ENCODE measurements at regions of chr11 and their contacts with region 1.

Region 1: GRCh38 chr11:124070915-124071635 is 29.9 kb upstream of the OR10G7 start:
- DNase-seq: peak; percentile 37
- ATAC-seq: peak; percentile 56
- H3K4me3 Mint-ChIP-seq: peak overlapping the region; percentile 24
- H3K27ac Mint-ChIP-seq: peak overlapping the region; percentile 27
- H3K4me1 Mint-ChIP-seq: peaks cover 17% of the 10 kb centered on the region
- H3K27me3 Mint-ChIP-seq: peaks cover 9% of the 10 kb centered on the region
- CTCF ChIP-seq: peak; percentile 38

Region 2: DNA sequence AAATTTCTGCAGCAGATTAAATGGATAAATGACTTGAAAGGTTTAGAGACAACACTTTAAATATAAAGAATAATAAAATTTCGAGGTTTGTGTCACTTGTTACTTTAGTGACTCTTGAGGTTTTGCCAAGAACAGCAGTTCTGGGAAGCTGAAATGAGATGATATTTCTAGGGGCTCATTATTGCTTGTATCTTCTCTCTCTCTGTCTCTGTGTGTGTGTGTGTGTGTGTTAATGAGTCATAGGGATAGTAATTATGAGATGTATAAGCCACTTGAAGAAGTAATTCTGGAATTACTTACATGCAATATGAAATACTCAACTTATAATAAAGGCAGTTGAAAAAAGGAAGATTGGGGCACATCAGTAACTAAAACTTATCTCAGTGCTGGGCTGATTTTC is 20.3 kb before region 1 on chr11:
- CTCF ChIA-PET with region 1: no interaction called
- POLR2A ChIA-PET with region 1: no interaction called
- intact Hi-C with region 1: no loop called
- DNase-seq: no peak
- ATAC-seq: no peak
- H3K4me3 Mint-ChIP-seq: no peak overlapping the region
- H3K27ac Mint-ChIP-seq: no peak overlapping the region
- H3K4me1 Mint-ChIP-seq: no peaks in the 10 kb centered on the region
- H3K27me3 Mint-ChIP-seq: peaks cover 2% of the 10 kb centered on the region
- CTCF ChIP-seq: no peak

Region 3: GRCh38 chr11:124108156-124108555 is 37.1 kb after region 1 on chr11:
- CTCF ChIA-PET with region 1: no interaction called
- POLR2A ChIA-PET with region 1: no interaction called
- intact Hi-C with region 1: loop called (anchors 2 kb)
- DNase-seq: no peak
- ATAC-seq: no peak
- H3K4me3 Mint-ChIP-seq: no peak overlapping the region
- H3K27ac Mint-ChIP-seq: no peak overlapping the region
- H3K4me1 Mint-ChIP-seq: peaks cover 18% of the 10 kb centered on the region
- H3K27me3 Mint-ChIP-seq: peaks cover 8% of the 10 kb centered on the region
- CTCF ChIP-seq: no peak

Region 4: DNA sequence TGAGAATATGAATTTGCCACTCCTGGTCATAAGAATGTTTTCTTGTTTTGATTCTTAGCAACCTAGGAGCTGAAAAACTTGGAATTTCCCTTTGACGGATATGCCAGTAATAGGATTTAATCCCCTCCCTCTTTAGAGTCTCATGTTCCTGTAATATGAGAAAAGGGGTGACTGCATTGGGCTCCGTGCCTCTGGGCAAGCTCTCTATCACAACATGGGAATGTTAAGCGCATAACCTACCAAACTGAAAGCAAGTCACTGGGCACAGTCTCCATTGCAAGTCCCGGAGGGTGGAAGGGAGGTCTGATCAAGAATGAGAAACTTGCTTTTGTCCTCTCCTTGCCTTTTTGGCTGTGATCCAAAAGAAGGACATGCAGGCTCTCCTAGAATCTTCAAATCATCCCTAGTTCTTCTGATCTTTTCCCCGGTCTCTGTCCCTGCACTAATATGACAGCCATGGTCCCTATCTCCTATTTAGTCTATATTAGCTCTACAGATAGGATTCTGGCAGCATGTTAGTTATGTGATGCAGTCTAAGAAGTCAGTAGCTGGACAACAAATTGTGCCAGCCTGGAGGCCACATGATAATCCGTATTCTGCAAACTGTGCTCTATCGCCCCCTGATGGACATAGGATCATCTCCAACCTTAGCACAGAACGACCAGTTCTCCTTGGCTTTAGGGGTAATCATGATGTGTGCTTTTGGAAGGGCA is 123.8 kb after region 1 on chr11:
- CTCF ChIA-PET with region 1: interaction called, 7 read pairs
- POLR2A ChIA-PET with region 1: no interaction called
- intact Hi-C with region 1: loop called (anchors 1 kb)
- DNase-seq: no peak
- ATAC-seq: no peak
- H3K4me3 Mint-ChIP-seq: no peak overlapping the region
- H3K27ac Mint-ChIP-seq: no peak overlapping the region
- H3K4me1 Mint-ChIP-seq: peaks cover 2% of the 10 kb centered on the region
- H3K27me3 Mint-ChIP-seq: peaks cover 2% of the 10 kb centered on the region
- CTCF ChIP-seq: no peak

Region 5: DNA sequence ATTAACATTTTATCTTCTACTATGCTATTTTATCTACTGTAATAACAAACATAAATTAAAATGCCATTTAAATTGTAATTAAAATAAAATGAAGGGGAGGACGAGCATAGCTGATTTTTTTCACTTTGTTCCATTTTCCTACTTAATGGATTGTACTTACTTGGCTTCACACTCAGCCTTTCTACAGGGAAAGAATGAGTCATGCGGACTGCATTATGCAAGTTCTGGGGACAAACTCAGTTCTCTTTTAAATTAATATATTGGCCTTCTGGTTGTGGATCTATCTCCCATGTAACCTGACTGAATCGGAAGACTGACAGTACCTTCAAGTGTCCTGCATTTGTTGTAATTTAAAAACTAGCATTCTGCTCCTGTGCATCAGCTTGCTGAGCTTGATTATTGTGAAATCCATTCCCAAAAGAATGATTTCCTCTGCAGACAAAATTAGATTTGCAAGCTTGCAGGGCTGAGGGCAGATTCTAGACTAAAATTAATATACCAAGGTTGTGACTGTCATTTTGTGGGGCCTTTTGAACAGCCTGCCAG is 230.5 kb after region 1 on chr11:
- CTCF ChIA-PET with region 1: no interaction called
- POLR2A ChIA-PET with region 1: no interaction called
- intact Hi-C with region 1: no loop called
- DNase-seq: no peak
- ATAC-seq: no peak
- H3K4me3 Mint-ChIP-seq: no peak overlapping the region
- H3K27ac Mint-ChIP-seq: no peak overlapping the region
- H3K4me1 Mint-ChIP-seq: no peaks in the 10 kb centered on the region
- H3K27me3 Mint-ChIP-seq: peaks cover 3% of the 10 kb centered on the region
- CTCF ChIP-seq: no peak

Region 6: DNA sequence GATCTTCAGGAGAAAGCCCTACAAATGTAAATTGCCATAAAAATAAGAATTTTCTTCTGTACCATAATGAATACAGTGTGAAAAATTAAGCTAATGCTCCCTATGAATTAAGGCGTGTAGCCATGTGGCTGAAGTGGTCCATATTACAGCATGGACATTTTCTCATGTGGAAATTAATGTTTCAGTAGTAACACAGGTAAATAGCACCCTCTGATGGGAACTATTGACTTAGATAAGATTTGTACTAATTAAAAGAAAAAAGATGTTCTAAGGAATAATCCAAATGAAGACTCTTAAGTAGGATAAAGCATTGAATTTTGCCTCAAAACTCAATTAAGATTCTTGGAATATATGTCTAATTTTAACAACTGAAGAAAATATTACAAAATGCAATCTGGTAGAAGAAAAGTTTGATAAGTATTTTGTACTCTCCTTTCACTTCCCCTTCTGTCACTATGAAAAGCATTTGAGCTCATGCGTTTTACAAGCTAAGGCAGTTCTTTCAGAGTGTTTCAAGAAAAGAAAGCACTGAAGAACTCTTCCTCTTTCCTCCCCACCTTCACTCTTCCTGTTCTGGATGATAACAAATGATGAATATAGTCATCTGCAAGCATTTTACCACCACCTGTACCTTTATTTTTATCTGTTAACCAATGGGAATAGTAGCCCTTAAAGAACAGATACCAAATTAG is 258.9 kb after region 1 on chr11:
- CTCF ChIA-PET with region 1: interaction called, 9 read pairs
- POLR2A ChIA-PET with region 1: no interaction called
- intact Hi-C with region 1: loop called (anchors 1 kb)
- DNase-seq: no peak
- ATAC-seq: peak; percentile 84
- H3K4me3 Mint-ChIP-seq: peak overlapping the region; percentile 19
- H3K27ac Mint-ChIP-seq: peak overlapping the region; percentile 55
- H3K4me1 Mint-ChIP-seq: peaks cover 49% of the 10 kb centered on the region
- H3K27me3 Mint-ChIP-seq: no peaks in the 10 kb centered on the region
- CTCF ChIP-seq: no peak

Region 7: GRCh38 chr11:124402326-124402922 is 331.3 kb after region 1 on chr11:
- CTCF ChIA-PET with region 1: no interaction called
- POLR2A ChIA-PET with region 1: no interaction called
- intact Hi-C with region 1: loop called (anchors 1 kb)
- DNase-seq: no peak
- ATAC-seq: peak; percentile 40
- H3K4me3 Mint-ChIP-seq: no peak overlapping the region
- H3K27ac Mint-ChIP-seq: no peak overlapping the region
- H3K4me1 Mint-ChIP-seq: peaks cover 6% of the 10 kb centered on the region
- H3K27me3 Mint-ChIP-seq: peaks cover 6% of the 10 kb centered on the region
- CTCF ChIP-seq: no peak

Region 8: DNA sequence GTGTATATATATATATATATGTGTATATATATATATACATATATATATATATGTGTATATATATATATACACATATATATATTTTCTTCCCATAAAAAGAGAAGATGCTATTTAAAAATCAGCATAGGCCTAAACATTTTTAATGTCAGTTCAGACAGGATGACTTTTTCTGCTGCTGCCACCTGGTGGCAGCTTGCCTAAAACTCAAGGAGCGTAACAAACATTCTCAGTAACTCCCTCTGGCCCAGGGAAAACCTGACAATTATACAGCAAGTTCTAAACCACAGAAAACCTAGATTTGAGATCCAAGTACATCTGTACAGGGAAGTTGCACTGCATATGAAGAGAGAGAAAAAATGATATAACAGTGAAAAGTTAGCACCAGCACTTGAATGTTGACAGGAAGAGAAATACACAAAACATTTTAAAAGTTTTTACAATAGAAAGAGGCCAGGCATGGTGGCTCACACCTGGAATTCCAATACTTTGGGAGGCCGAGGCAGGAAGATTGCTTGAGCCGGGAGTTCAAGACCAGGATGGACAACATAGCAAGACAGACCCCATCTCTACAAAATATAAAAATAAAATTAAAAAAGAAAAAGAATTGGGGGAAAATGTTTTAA is 515.3 kb after region 1 on chr11:
- CTCF ChIA-PET with region 1: interaction called, 49 read pairs
- POLR2A ChIA-PET with region 1: no interaction called
- intact Hi-C with region 1: loop called (anchors 1 kb)
- DNase-seq: peak; percentile 20
- ATAC-seq: no peak
- H3K4me3 Mint-ChIP-seq: no peak overlapping the region
- H3K27ac Mint-ChIP-seq: no peak overlapping the region
- H3K4me1 Mint-ChIP-seq: no peaks in the 10 kb centered on the region
- H3K27me3 Mint-ChIP-seq: peaks cover 12% of the 10 kb centered on the region
- CTCF ChIP-seq: no peak

Region 9: DNA sequence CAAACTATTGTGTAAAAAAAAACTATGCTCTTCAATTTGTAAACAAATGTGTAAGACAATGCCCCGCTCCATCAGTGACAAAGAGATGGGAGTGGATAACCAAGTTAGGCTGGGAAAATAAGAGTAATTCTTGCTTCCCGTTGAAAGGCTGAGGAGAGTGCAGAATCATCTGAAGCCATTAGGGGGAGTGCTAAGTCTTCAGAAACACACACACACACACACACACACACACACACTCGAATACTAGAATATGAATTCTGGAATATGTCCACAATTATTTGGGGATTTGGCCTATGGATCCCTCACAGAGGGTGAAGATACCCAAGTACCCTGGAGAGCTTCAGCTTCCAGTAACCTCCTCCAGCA is 766.4 kb after region 1 on chr11:
- CTCF ChIA-PET with region 1: no interaction called
- POLR2A ChIA-PET with region 1: no interaction called
- intact Hi-C with region 1: loop called (anchors 2 kb)
- DNase-seq: no peak
- ATAC-seq: no peak
- H3K4me3 Mint-ChIP-seq: no peak overlapping the region
- H3K27ac Mint-ChIP-seq: no peak overlapping the region
- H3K4me1 Mint-ChIP-seq: peaks cover 16% of the 10 kb centered on the region
- H3K27me3 Mint-ChIP-seq: peaks cover 47% of the 10 kb centered on the region
- CTCF ChIP-seq: no peak

Measured in activated B cell treated with CpG ODN at 0.5 μM for 24 hours (primary cell).